ENCODE measurements at regions of chr9 and their contacts with region 1.

Region 1: DNA sequence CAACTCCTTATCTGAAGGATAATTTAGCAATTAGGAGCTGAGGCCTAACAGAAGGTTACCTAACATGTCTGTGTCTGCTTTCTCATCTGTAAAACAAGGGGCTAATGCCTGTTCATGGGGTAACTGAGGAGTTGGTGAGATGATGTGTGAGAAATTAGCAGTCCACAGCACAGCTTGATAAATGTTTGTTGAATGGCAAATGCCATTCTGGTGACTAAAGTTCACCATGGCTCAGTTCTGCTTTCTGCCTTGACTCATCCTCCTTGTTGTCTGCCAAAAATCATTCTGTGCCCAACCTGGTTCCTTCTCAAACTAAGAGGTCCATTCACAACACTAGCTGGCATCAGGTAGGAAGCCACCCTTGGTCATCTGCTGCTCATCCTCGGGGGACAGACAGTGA is 552.0 kb upstream of the KLF4 start:
- DNase-seq: no peak
- H3K4me3 ChIP-seq: no peak overlapping the region
- H3K27ac ChIP-seq: no peak overlapping the region
- H3K27me3 ChIP-seq: no peaks in the 10 kb centered on the region
- CTCF ChIP-seq: no peak

Region 2: GRCh38 chr9:107547303-107548047 is 494.1 kb before region 1 on chr9:
- CTCF ChIA-PET with region 1: interaction called, 10 read pairs
- POLR2A ChIA-PET with region 1: no interaction called
- DNase-seq: no peak
- H3K4me3 ChIP-seq: no peak overlapping the region
- H3K27ac ChIP-seq: no peak overlapping the region
- H3K27me3 ChIP-seq: no peaks in the 10 kb centered on the region
- CTCF ChIP-seq: no peak